WTC11 (cell line): ENCODE measurements at regions of chr11 and their contacts with region 1.

Region 1: DNA sequence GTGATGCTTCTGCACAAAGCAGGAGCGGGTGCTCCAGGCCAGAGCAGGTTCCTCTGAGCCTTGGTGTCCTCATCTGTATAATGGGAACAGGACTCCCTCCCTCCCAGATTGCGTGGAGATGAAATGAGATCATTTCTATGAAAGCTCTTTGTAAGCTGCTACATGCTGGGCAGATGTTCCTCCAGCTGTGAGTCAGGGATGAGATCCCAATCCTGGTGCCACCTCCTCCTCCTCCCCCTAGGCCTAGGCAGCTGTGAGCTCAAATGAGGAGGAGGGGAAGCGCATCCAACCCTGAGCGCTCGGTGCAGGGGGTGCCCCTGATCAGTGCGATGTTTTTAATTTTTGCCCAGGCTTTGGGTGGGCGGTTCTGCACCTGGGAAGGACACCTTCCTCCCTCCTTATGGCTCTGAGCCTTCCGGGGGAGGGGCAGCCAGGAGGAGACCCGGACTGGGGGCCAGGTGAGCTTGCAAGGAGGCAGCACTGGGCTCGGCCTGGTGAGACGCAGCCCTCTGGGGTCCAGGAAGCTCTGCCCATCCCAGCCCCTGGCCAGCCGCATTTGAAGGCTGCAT is 7.1 kb upstream of the CABP2 start:
- DNase-seq: no peak
- ATAC-seq: no peak
- H3K4me3 Mint-ChIP-seq: no peak overlapping the region
- H3K27ac Mint-ChIP-seq: no peak overlapping the region
- H3K4me1 Mint-ChIP-seq: no peaks in the 10 kb centered on the region
- H3K27me3 Mint-ChIP-seq: peaks cover 28% of the 10 kb centered on the region
- CTCF ChIP-seq: no peak

Region 2: DNA sequence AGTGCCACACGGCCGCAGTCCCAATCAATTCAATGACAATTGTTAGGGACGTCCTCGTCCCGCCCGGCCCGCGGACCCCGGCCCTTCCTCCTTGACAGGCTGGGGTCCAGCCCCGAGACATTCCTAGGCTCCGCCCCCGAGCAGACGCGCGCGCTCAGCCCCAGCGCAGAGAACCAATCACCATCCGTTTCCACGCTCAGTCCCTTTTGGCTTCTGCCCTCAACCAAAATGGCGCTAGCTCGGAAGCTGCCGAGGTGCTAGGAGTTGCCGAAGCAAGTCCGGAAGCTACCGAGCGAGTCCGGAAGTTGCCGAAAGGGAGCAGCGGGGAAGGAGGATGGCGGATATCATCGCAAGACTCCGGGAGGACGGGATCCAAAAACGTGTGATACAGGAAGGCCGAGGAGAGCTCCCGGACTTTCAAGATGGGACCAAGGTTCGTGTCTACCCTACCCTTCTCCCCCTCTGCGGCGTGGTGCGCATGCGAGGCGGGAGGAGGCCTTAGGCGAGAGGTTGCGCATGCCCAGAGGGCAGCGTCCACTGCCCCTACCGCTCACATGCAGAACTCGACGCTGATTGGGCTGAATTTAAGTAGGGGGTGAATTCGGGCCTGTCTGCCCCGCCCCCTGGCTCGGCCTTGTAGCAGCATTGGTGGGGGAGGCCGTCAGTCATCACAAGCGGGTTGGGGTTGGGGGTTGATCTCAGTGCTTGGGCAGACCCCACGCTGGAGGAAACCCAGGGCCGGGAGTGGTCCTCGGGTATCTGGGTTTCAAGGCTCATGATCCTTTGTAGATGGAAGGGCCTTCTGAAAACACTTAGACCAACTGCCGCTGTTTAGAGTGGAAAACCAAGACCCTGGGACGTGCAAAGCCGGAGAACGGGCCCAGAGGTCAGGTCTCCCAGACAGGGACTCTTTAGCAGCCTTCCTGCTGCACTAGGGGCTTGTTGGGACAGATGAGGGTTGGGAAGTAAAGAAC is 47.3 kb before region 1 on chr11 and contains the start of gene AIP:
- CTCF ChIA-PET with region 1: no interaction called
- POLR2A ChIA-PET with region 1: no interaction called
- DNase-seq: peak; percentile 98
- ATAC-seq: peak; percentile 94
- H3K4me3 Mint-ChIP-seq: peak within 1 kb of the TSS; percentile 75
- H3K27ac Mint-ChIP-seq: peak within 1 kb of the TSS; percentile 73
- H3K4me1 Mint-ChIP-seq: peaks cover 19% of the 10 kb centered on the region
- H3K27me3 Mint-ChIP-seq: peaks cover 45% of the 10 kb centered on the region
- CTCF ChIP-seq: no peak
- total RNA-seq, gene AIP: 32.8 to 42.1 TPM (median 40.0 TPM) in 3 replicates

Region 3: GRCh38 chr11:67545280-67545679 is 14.9 kb after region 1 on chr11:
- CTCF ChIA-PET with region 1: interaction called, 13 read pairs
- POLR2A ChIA-PET with region 1: no interaction called
- DNase-seq: peak; percentile 36
- ATAC-seq: peak; percentile 74
- H3K4me3 Mint-ChIP-seq: no peak overlapping the region
- H3K27ac Mint-ChIP-seq: no peak overlapping the region
- H3K4me1 Mint-ChIP-seq: peaks cover 6% of the 10 kb centered on the region
- H3K27me3 Mint-ChIP-seq: peaks cover 2% of the 10 kb centered on the region
- CTCF ChIP-seq: no peak

Region 4: DNA sequence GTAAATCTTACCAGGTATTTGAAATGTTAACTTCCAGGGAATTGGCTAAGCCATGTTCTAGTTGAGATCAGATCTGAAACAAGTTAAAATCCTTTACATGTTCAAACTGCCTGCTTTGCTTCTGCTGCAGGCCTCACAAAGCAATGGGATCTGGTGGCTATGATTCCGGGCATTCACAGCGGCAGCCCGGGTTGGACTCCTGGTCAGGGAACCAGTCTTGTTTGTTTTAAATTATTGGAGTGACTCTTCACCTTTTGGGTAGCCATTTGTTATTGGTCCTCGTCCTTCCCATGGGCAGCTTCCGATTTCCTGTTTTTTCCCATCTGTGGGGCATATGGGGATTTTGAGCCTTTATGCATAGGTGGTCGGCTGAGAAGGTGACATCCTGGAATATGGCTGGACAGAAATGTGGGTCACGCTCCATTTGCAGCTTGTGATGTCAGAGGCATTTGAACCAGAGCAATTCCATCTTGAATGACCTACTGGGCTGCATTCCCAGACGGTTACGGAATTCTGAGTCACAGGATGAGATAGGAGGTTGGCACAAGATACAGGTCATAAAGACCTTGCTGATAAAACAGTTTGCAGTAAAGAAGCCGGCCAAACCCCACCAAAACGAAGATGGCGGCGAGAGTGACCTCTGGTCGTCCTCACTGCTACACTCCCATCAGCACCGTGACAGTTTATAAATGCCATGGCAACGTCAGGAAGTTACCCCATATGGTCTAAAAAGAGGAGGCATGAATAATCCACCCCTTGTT is 33.2 kb after region 1 on chr11:
- CTCF ChIA-PET with region 1: no interaction called
- POLR2A ChIA-PET with region 1: no interaction called
- DNase-seq: no peak
- ATAC-seq: no peak
- H3K4me3 Mint-ChIP-seq: no peak overlapping the region
- H3K27ac Mint-ChIP-seq: no peak overlapping the region
- H3K4me1 Mint-ChIP-seq: peaks cover 17% of the 10 kb centered on the region
- H3K27me3 Mint-ChIP-seq: peaks cover 5% of the 10 kb centered on the region
- CTCF ChIP-seq: no peak